ENCODE measurements at regions of chr3 and their contacts with region 1.

Region 1: DNA sequence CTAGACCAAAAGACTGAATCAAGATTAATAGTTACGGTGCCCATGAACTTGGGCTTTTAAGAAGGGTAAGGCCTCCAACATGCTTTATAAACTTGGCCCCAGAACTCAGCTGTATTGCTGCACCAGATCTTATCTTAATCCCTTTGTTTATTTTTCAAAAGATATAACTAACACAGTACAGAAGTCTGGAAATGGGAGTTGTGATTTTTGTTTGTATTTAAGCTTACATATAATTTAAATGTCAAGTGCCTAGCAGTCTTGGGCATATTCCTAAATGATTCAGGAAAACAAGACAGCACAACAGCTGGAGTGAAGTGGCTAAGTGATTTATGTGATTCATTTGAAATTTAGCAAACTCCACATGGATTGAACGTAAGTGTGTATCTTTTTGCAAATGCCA is 56.2 kb downstream of the NBEAL2 start:
- DNase-seq: no peak
- ATAC-seq: no peak
- H3K4me3 ChIP-seq: no peak overlapping the region
- H3K27ac ChIP-seq: no peak overlapping the region
- H3K4me1 ChIP-seq: no peaks in the 10 kb centered on the region
- H3K27me3 ChIP-seq: no peaks in the 10 kb centered on the region
- CTCF ChIP-seq: no peak
- EP300 ChIP-seq: no peak
- POLR2A ChIP-seq: no peak
- RAD21 ChIP-seq: no peak

Region 2: DNA sequence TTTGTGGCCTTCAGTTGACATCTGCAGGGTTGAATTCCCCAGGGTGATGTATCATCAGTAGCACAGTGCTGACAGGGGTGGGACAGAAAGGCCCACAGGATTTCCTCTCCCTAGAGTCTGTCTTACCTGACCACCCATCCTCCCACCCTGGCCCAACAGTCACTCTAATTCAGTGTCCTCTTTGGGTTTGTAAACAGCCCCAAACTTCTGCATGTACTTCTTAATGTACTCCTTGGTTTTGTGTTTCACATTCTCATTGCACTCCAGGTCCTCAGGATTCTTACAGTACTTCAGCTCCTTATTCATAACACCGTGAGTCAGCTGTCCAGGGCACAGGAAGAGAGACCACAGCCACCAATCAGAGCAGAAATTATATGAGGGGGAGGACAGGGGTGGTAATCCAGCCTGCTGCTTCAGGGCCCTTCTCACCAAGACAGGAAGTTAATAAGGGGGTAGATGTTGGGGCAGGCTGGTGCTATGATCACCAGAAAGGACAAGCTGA is 18.6 kb before region 1 on chr3:
- CTCF ChIA-PET with region 1: interaction called, 27 read pairs
- POLR2A ChIA-PET with region 1: no interaction called
- RAD21 ChIA-PET with region 1: interaction called, 4 read pairs
- SMC1A ChIA-PET with region 1: interaction called, 83 read pairs
- in situ Hi-C with region 1: no loop called
- intact Hi-C with region 1: no loop called
- DNase-seq: peak; percentile 40
- ATAC-seq: peak; percentile 48
- H3K4me3 ChIP-seq: no peak overlapping the region
- H3K27ac ChIP-seq: peak overlapping the region; percentile 40; the same call in 1 of the 2 replicates
- H3K4me1 ChIP-seq: peaks cover 14% of the 10 kb centered on the region
- H3K27me3 ChIP-seq: no peaks in the 10 kb centered on the region
- CTCF ChIP-seq: no peak
- EP300 ChIP-seq: no peak
- POLR2A ChIP-seq: no peak
- RAD21 ChIP-seq: no peak

Measured in GM12878 (cell line).